Dorsolateral prefrontal cortex (tissue), 120 donors: ENCODE measurements at regions of chr13 and their contacts with region 1.

Region 1: DNA sequence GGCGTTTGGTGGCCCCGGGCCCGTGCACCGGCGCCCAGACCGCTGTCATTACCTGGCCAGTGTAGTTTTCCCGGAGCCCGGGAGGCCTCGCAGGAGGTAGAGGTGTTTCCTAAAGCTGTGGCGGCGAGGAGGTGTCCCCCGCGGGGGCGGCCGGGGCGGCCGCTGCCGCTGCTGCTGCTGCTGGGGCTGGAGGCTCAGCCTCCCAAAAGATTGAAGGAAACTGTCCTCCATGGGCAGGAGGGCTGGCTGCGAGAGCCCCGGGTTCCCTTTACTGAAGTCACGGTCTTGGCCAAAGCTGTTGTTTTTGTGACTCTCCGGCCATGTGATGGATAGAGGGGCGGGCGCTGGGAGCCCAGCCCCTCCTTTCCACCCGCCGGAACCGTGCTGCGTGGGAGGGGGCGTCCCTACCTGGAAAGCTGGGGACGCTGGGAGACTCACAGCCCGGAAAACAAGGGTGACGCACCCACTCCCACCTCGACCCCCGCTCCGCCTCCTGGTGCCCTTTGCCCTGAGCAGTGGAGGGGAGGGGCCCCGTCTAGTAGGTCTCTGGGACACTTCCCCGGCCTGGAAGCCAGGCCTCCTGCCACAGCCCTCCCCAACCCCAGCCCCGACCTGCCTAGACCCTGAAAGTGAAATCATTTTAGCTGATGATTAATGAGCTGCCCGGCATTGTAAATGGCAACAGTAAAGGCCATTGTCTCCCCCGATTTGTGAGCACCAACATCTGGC is at the start of gene N4BP2L1:
- DNase-seq: peak; percentile 60 to 90 (median 74)
- H3K4me3 ChIP-seq: peak within 1 kb of the TSS; percentile 58 to 95 (median 87)
- H3K27ac ChIP-seq: peak within 1 kb of the TSS; percentile 54 to 99 (median 94)
- H3K27me3 ChIP-seq: no peaks in the 10 kb centered on the region
- CTCF ChIP-seq: peak in 6 of 56 donors; percentile 6 to 25 (median 14)
- total RNA-seq, gene N4BP2L1: 33.3 to 87.5 (median 55.8) TPM

Region 2: DNA sequence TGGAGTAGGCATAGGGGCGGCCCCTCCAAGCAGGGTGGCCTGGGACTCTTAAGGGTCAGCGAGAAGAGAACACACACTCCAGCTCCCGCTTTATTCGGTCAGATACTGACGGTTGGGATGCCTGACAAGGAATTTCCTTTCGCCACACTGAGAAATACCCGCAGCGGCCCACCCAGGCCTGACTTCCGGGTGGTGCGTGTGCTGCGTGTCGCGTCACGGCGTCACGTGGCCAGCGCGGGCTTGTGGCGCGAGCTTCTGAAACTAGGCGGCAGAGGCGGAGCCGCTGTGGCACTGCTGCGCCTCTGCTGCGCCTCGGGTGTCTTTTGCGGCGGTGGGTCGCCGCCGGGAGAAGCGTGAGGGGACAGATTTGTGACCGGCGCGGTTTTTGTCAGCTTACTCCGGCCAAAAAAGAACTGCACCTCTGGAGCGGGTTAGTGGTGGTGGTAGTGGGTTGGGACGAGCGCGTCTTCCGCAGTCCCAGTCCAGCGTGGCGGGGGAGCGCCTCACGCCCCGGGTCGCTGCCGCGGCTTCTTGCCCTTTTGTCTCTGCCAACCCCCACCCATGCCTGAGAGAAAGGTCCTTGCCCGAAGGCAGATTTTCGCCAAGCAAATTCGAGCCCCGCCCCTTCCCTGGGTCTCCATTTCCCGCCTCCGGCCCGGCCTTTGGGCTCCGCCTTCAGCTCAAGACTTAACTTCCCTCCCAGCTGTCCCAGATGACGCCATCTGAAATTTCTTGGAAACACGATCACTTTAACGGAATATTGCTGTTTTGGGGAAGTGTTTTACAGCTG is 112.6 kb before region 1 on chr13 and contains the starts of genes BRCA2 and ZAR1L:
- intact Hi-C with region 1: loop called in 1 of 2 experiments (anchors 10 kb)
- DNase-seq: peak; percentile 86 to 92 (median 90)
- H3K4me3 ChIP-seq: peak within 1 kb of the TSS; percentile 56 to 90 (median 77)
- H3K27ac ChIP-seq: peak within 1 kb of the TSS in 58 of 59 donors; percentile 36 to 97 (median 89)
- H3K27me3 ChIP-seq: no peaks in the 10 kb centered on the region
- CTCF ChIP-seq: peak in 40 of 56 donors; percentile 10 to 58 (median 31)
- total RNA-seq, gene BRCA2: 0.11 to 3.3 (median 0.60) TPM
- total RNA-seq, gene ZAR1L: 0.35 TPM in 2 of 120 experiments, not detected in the others

Region 3: DNA sequence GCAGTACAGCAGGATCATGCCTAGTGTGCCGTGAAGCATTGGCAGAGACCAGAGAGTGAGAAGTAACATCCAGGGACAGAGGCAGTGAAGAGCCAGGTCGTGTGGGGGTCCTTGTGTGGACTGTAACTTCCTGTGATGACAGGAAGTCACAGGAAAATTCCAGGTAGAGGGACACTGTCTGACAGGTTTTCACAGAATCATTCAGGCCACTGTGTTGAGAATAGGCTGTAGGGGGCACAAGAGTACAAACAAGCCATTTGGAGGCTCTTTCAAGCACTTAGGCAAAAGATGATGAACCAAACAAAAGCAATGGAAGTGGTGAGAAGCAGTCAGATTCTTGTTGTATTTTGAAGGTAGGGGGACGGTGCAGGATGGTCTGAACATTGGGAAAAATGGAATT is 46.5 kb before region 1 on chr13:
- intact Hi-C with region 1: loop called in 1 of 2 experiments (anchors 5 kb)
- DNase-seq: no peak
- H3K4me3 ChIP-seq: no peak overlapping the region
- H3K27ac ChIP-seq: no peak overlapping the region
- H3K27me3 ChIP-seq: no peaks in the 10 kb centered on the region
- CTCF ChIP-seq: peak in 54 of 56 donors; percentile 10 to 77 (median 57)

Region 4: GRCh38 chr13:32472194-32472621 is 44.2 kb after region 1 on chr13:
- intact Hi-C with region 1: loop called in 1 of 2 experiments (anchors 5 kb)
- DNase-seq: no peak
- H3K4me3 ChIP-seq: peak overlapping the region in 1 of 59 donors; percentile 22
- H3K27ac ChIP-seq: peak overlapping the region in 58 of 59 donors; percentile 18 to 93 (median 83)
- H3K27me3 ChIP-seq: no peaks in the 10 kb centered on the region
- CTCF ChIP-seq: no peak

Region 5: DNA sequence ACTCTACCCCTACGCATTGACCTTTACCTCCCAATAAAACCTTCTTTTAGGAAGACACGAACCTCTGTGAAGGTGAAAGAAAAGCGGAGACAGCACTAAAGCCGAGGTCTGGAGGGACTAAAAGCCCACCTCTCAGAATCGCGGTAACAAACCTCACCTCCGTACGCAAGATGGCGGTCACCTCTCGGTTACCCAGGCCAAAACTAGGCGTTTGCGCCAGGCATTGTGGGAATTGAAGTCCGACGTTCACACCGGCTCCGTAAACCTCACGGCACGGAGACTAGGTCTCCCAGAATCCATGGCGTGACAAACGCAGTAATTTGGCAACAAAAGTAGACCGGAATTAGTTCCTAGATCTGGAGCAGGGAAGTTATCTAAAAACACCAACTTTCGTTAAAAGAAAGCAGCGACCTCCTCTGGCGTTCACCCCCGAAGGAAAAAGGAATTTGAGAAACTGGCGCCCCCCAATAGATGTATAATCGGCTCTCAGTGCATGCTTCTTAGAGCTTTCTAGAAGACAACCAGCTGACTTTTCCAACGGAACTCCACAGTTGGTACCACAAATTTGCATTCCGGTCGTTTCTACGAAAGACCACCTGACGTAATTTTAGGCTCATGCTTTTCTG is 110.7 kb after region 1 on chr13 and contains the start of gene N4BP2L2:
- intact Hi-C with region 1: loop called (anchors 5 kb)
- DNase-seq: peak; percentile 91 to 98 (median 94)
- H3K4me3 ChIP-seq: peak within 1 kb of the TSS; percentile 65 to 98 (median 90)
- H3K27ac ChIP-seq: peak within 1 kb of the TSS; percentile 51 to 97 (median 90)
- H3K27me3 ChIP-seq: no peaks in the 10 kb centered on the region
- CTCF ChIP-seq: peak; percentile 41 to 86 (median 70)
- total RNA-seq, gene N4BP2L2: 137 to 249 (median 191) TPM

Region 6: GRCh38 chr13:32581177-32581786 is 153.3 kb after region 1 on chr13:
- intact Hi-C with region 1: loop called in 1 of 2 experiments (anchors 5 kb)
- DNase-seq: no peak
- H3K4me3 ChIP-seq: no peak overlapping the region
- H3K27ac ChIP-seq: no peak overlapping the region
- H3K27me3 ChIP-seq: no peaks in the 10 kb centered on the region
- CTCF ChIP-seq: peak; percentile 42 to 84 (median 68)